ENCODE measurements at regions of chr19 and their contacts with region 1.

Region 1: DNA sequence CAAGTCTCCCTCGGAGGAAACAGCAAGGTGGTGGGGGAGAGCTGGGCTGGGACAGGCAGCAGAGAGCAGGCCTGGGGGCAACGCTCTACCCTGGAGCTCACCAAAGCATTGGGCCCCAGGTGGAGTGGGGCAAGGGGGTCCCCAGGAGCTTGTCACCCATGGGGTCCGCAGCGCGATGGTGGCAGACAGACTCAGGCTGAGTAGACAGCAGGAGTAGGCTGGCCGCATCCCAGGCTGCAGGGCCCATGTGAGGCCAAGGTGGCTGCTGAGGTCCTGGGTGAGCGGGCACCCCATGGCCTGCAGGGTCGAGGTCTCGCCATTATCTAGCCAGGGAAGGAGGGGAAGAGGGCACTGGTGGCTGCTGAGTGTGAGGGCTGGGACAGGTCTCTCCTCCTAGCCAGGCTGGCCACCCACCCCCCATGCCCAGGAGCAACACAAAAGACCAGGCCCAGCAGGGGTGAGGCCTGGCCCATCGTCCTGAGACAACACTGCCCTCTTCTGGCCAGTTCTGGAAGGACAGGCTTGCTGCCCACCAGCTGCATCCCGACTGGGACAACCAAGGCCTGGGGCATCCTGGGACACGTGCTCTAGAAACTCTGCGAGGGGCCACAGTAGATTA is 33.1 kb downstream of the CEBPG start:
- DNase-seq: peak; percentile 52 to 69 (median 56)
- H3K4me3 ChIP-seq: no peak overlapping the region
- H3K4me3 Mint-ChIP-seq: no peak overlapping the region
- H3K27ac ChIP-seq: no peak overlapping the region
- H3K27ac Mint-ChIP-seq: peak overlapping the region in 1 of 7 donors; percentile 2
- H3K4me1 ChIP-seq: no peaks in the 10 kb centered on the region
- H3K4me1 Mint-ChIP-seq: no peaks in the 10 kb centered on the region
- H3K27me3 ChIP-seq: no peaks in the 10 kb centered on the region
- H3K27me3 Mint-ChIP-seq: no peaks in the 10 kb centered on the region

Region 2: GRCh38 chr19:33040994-33041827 is 365.4 kb before region 1 on chr19:
- CTCF ChIA-PET with region 1: no interaction called
- POLR2A ChIA-PET with region 1: no interaction called
- intact Hi-C with region 1: no loop called
- DNase-seq: no peak
- H3K4me3 ChIP-seq: no peak overlapping the region
- H3K4me3 Mint-ChIP-seq: no peak overlapping the region
- H3K27ac ChIP-seq: no peak overlapping the region
- H3K27ac Mint-ChIP-seq: no peak overlapping the region
- H3K4me1 ChIP-seq: peaks cover 5% of the 10 kb centered on the region
- H3K4me1 Mint-ChIP-seq: peaks cover 7 to 9% (median 8%) of the 10 kb centered on the region in 4 donors
- H3K27me3 ChIP-seq: no peaks in the 10 kb centered on the region
- H3K27me3 Mint-ChIP-seq: peaks cover 0 to 2% of the 10 kb centered on the region in 2 donors

Region 3: DNA sequence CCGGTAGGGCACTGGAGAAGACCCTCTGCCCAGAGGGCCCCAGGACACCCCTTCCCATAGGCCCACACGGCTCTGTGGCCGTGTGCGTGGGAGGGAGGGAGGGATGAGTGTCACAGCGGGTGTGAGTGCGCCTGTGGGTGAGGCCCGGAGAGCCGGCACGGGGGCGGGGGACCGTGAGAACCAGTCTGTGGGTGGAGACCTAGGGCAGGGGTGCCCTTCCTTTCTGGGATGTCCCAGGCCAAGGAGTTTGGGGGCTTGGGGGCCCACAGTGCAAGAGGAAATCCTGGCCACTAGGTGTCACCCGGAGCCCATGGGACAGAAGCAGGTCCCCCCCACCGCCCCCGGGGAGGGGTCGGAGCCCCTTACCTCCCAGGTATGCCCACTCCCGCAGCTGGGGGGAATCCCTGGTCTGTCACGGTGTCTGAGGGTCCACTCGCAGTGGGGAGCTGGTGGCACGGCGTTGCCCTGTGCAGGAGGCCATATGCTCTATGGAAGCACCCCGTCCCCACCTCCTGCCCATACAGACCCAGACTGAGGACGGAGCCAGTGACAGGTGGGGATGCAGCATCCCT is 165.0 kb before region 1 on chr19:
- CTCF ChIA-PET with region 1: interaction called, 125 read pairs
- POLR2A ChIA-PET with region 1: no interaction called
- intact Hi-C with region 1: loop called (anchors 1 kb)
- DNase-seq: peak in 1 of 5 donors; percentile 6
- H3K4me3 ChIP-seq: no peak overlapping the region
- H3K4me3 Mint-ChIP-seq: no peak overlapping the region
- H3K27ac ChIP-seq: no peak overlapping the region
- H3K27ac Mint-ChIP-seq: no peak overlapping the region
- H3K4me1 ChIP-seq: no peaks in the 10 kb centered on the region
- H3K4me1 Mint-ChIP-seq: peaks cover 0 to 15% (median 0%) of the 10 kb centered on the region in 4 donors
- H3K27me3 ChIP-seq: no peaks in the 10 kb centered on the region
- H3K27me3 Mint-ChIP-seq: no peaks in the 10 kb centered on the region

Region 4: DNA sequence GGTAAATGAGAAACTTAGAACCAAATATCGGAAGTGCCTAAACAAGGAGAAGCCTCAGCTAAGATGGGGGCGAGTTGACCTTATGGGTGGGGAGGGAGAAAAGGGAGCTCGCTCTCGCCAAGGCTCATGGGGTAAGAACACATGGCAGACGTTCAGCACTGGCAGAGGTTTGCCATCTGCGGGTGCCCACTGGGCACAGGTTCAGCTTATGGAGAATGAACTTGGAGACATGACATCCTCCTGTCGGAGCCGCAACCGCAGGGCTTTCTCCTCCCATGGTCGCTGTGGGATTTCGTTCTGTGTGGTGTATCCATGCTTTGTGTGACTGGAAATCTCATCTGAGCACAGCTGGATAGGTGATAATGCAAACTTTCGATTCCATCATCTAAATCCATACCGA is 151.1 kb after region 1 on chr19:
- CTCF ChIA-PET with region 1: no interaction called
- POLR2A ChIA-PET with region 1: no interaction called
- intact Hi-C with region 1: no loop called
- DNase-seq: no peak
- H3K4me3 ChIP-seq: no peak overlapping the region
- H3K4me3 Mint-ChIP-seq: no peak overlapping the region
- H3K27ac ChIP-seq: no peak overlapping the region
- H3K27ac Mint-ChIP-seq: no peak overlapping the region
- H3K4me1 ChIP-seq: no peaks in the 10 kb centered on the region
- H3K4me1 Mint-ChIP-seq: no peaks in the 10 kb centered on the region
- H3K27me3 ChIP-seq: no peaks in the 10 kb centered on the region
- H3K27me3 Mint-ChIP-seq: peaks cover 0 to 6% of the 10 kb centered on the region in 2 donors